Calu3 (cell line): ENCODE measurements at regions of chr1 and their contacts with region 1.

Region 1: DNA sequence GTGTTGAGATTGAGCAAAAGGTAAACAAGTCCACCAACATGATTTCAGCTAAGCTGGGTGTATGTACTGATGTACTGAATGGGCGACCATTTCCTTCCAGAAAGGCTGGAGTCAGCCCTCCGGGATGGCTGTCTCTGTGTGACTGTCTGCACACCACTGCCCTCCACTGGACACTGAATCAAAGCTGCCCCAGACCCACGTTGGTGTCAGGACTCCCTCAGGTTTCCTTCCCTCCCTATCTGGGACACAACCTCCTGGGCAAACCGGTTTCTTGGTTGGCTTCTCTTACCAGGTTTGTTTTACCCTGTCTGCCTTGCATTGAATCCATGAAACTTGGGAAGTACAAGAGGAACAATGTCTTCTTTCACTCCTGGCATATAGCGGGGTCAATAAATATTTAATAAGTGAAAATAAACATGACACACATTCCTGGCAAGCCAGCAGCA is 5.3 kb upstream of the SRP9 start:
- DNase-seq: peak; percentile 98
- H3K4me3 Mint-ChIP-seq: peak overlapping the region; percentile 35
- H3K27ac Mint-ChIP-seq: peak overlapping the region; percentile 61
- H3K4me1 Mint-ChIP-seq: peaks cover 63% of the 10 kb centered on the region
- H3K27me3 Mint-ChIP-seq: no peaks in the 10 kb centered on the region
- CTCF ChIP-seq: peak; percentile 85

Region 2: DNA sequence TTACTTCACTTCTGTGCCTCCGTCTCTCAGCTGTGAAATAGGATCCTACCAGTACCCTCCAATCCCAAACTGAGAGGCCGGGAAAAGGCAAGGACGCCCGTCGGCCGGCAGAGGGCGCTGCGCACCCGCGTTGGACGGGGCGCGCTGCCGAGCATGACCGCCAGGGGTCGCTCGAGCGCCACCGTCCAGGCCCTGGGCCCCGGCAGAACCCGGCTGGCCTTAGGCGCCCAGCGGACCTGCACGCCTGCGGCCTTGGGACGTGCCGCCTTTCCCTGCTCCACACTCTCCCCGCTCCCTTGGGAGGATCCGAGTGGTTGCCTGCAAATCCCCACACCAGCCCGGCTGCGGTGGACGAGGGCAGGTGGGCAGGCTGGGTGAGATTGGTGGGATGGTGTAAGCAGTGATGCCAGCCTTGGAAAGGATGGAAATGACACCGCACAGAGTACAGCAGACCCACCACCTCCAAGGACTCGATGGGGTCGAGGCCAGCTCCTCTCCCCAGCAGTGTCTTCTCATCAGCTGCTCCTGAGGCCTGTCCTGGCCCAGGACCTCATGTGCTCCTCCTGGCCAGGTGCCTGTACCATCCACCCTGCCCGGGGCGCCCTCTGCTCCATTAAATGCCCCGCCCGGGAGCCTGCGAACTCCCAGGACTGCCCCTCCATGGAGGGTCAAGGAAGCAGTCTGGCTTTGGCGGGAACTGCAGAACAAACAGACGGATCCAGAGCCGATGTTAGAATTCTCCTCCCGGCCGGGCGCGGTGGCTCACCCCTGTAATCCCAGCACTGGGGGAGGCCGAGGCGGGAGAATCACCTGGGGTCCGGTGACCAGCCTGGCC is 297.1 kb before region 1 on chr1:
- CTCF ChIA-PET with region 1: interaction called, 11 read pairs
- intact Hi-C with region 1: no loop called
- DNase-seq: peak; percentile 81
- H3K4me3 Mint-ChIP-seq: no peak overlapping the region
- H3K27ac Mint-ChIP-seq: no peak overlapping the region
- H3K4me1 Mint-ChIP-seq: peaks cover 10% of the 10 kb centered on the region
- H3K27me3 Mint-ChIP-seq: no peaks in the 10 kb centered on the region
- CTCF ChIP-seq: peak; percentile 100

Region 3: GRCh38 chr1:225508538-225509375 is 263.6 kb before region 1 on chr1:
- CTCF ChIA-PET with region 1: interaction called, 22 read pairs
- intact Hi-C with region 1: no loop called
- DNase-seq: peak; percentile 63
- H3K4me3 Mint-ChIP-seq: peak overlapping the region; percentile 27
- H3K27ac Mint-ChIP-seq: peak overlapping the region; percentile 91
- H3K4me1 Mint-ChIP-seq: peaks cover 22% of the 10 kb centered on the region
- H3K27me3 Mint-ChIP-seq: no peaks in the 10 kb centered on the region
- CTCF ChIP-seq: no peak

Region 4: GRCh38 chr1:225603538-225604354 is 168.6 kb before region 1 on chr1:
- CTCF ChIA-PET with region 1: interaction called, 5 read pairs
- intact Hi-C with region 1: loop called (anchors 2 kb)
- DNase-seq: peak; percentile 27
- H3K4me3 Mint-ChIP-seq: peak overlapping the region; percentile 47
- H3K27ac Mint-ChIP-seq: peak overlapping the region; percentile 74
- H3K4me1 Mint-ChIP-seq: peaks cover 61% of the 10 kb centered on the region
- H3K27me3 Mint-ChIP-seq: no peaks in the 10 kb centered on the region
- CTCF ChIP-seq: no peak

Region 5: DNA sequence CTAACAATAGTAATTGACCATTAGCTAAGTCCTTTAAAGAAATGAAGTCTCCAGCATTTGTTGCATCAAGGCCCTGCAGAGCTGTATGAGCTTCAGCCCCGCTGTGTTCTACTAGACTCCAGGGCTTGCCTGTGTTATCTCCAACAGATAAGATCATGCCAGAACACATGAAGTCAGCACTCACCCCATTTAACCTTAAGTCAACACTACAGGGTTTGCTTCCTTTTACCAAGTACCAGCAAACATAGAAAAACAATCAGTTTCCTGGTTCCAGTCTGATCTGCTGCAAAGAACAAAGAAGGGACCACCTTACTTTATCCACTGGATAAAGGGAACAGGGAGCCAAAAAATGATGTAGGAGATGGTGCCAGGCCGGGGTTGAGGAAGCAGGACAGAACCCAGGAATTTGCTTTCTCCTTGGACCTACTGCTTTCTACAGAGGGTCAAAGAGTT is 78.2 kb before region 1 on chr1:
- CTCF ChIA-PET with region 1: interaction called, 10 read pairs
- intact Hi-C with region 1: no loop called
- DNase-seq: peak; percentile 16
- H3K4me3 Mint-ChIP-seq: no peak overlapping the region
- H3K27ac Mint-ChIP-seq: peak overlapping the region; percentile 47
- H3K4me1 Mint-ChIP-seq: peaks cover 23% of the 10 kb centered on the region
- H3K27me3 Mint-ChIP-seq: no peaks in the 10 kb centered on the region
- CTCF ChIP-seq: no peak

Region 6: GRCh38 chr1:225746361-225747179 is 25.8 kb before region 1 on chr1:
- CTCF ChIA-PET with region 1: interaction called, 13 read pairs
- intact Hi-C with region 1: loop called (anchors 2 kb)
- DNase-seq: peak; percentile 81
- H3K4me3 Mint-ChIP-seq: peak overlapping the region; percentile 54
- H3K27ac Mint-ChIP-seq: peak overlapping the region; percentile 71
- H3K4me1 Mint-ChIP-seq: peaks cover 23% of the 10 kb centered on the region
- H3K27me3 Mint-ChIP-seq: no peaks in the 10 kb centered on the region
- CTCF ChIP-seq: no peak